ENCODE measurements at regions of chr17 and their contacts with region 1.

Region 1: DNA sequence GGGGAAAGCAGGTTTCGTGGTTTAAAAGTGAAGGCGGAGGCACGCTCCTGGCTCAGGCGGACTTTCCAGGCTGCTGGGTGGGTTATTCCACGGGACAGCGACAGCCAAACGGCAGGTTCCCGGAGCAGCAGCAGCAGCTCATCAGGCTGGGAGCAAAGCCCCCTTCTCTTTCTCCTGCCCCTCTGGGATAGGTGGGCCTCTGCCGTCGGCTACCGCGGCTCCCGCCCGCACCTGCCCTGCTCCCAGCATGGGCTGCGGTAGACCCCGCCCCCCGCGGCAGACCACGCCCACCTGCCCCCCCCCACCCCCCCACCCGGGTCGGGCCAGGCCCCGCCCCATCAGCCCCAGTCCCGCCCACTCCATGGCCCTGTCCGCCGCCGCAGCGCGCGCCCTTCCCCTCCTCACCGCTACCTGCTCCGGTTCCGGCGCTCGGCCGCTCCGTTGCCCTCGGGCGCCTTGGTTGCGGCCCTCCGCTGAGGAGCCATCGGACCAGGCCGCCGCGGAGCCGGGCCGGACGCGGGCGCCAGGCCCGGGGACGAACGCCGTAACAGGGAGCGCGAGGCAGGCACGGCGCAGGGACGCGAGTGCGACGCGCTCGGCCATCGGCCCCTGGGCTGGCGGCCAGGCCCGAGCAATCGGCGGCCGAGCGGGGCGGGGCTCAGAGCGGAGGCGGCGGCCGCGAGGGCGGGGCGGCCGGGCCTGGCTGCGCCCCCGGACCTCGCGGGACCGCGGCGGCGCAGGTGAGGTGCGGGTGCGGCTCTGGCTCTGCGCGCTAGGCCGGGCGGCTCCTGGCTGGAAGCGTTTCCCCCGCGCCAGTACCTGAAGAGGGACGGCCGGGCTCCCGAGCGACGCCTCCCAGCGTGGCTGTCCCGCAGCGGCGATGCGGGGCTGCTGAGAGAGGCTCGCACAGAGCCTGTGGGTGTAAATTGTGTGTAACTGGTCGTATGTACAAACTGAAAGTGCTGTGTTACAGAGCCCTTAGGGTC is at the starts of genes HEXD and OGFOD3:
- DNase-seq: peak; percentile 71
- H3K4me3 ChIP-seq: peak within 1 kb of the TSS; percentile 73
- CTCF ChIP-seq: no peak

Region 2: DNA sequence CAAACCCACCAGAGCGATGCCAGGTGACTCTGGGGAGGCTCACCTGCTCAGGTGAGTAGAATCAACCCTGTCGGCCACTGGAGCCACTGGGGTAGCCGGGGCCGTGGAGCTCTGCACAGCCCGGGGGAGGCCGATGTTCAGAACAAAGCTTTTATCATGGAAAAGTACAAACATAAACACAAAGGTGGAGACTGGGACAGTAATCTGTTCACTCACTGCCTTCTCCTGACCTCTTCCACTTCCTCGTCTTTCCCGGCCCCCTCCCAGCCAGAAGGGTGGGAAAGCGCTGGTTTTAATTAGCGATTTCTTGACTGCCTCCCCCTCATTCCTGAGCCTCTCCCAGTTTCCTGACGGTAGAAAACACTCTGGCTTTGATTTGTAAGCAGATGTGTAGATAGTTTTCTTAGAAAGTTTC is 69.0 kb before region 1 on chr17:
- in situ Hi-C with region 1: loop called (anchors 10 kb)
- DNase-seq: no peak
- H3K4me3 ChIP-seq: no peak overlapping the region
- CTCF ChIP-seq: no peak